ENCODE measurements at regions of chr9 and their contacts with region 1.

Region 1: DNA sequence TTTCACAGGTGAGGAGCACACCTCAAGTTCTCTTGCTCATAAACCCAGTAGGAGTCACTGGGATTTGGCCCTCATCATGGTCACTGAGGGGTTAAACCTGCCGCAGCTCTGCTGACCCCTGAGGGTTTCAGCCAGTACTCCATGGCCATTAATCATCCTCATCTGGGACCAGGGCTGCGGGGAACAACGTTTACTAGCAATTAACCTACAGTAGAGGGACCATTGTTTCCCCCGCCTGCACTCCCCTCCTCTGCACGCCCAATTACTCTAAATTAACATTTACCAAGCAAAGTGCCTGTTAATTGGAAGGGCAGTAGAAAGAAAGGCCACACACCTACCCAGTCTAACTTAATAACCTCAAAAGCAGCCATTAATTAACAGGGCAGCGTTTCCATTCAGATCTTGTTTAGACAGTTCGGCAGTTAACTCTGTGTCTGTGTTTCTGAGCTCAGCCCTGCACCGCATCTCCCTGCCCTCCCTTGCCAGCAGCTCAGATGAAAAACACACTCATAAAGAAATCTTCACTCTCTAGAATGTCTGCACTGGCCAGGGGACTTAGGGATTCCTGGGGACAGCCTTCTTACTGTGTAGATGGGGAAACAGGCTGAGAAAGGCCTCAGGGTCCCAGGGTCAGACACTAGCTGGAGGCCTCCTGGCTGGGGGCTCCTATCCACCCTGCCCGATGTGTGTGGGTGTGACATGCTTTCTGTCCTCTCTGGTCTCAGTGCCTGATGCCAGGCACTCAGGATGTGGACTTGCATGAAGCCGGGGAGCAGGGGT is 51.6 kb downstream of the ALG2 start:
- DNase-seq: no peak
- H3K4me3 Mint-ChIP-seq: no peak overlapping the region
- H3K27ac Mint-ChIP-seq: no peak overlapping the region
- H3K4me1 Mint-ChIP-seq: peaks cover 35% of the 10 kb centered on the region
- H3K27me3 Mint-ChIP-seq: peaks cover 5% of the 10 kb centered on the region

Region 2: DNA sequence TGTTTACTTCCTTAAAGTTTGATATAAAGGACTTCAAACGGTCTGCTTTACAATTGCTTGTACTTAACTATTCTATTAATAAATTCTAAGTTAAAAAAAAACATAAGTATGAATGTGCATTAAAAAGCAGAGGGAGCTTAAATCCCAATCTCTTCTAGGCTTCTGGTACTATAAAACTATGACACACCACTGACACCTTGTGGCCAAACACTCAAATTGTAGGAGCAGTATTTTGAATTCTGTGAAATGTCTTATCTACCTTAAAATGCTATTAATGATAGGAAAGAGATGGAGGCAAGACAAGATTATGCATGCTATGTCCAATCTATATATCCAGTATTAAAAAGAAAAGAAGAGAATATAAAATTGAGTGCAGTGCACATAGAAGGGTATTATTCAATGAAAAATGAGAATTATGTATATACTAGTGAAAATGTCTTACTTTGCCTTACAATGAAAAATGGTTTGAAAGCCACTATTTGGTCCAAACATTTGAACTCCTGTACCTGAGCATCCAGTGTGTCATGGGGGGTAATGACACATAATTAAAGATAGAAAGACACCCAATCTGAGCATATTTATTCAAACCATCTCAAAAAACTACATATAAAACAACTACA is 841.0 kb after region 1 on chr9:
- intact Hi-C with region 1: loop called (anchors 5 kb)
- DNase-seq: no peak
- H3K4me3 Mint-ChIP-seq: no peak overlapping the region
- H3K27ac Mint-ChIP-seq: no peak overlapping the region
- H3K4me1 Mint-ChIP-seq: no peaks in the 10 kb centered on the region
- H3K27me3 Mint-ChIP-seq: no peaks in the 10 kb centered on the region

Measured in activated T-helper 2 cell treated with anti-CD3 and anti-CD28 coated beads, Interferon-gamma antibody, Interleukin-2, Interleukin-4, amounts not matched to agents 10 μg/mL and 5 μg/mL and 100 μg/mL, durations not matched to agents 14 hours and 24 hours and 36 hours (primary cell).